ENCODE measurements at regions of chr14 and their contacts with region 1.

Region 1: GRCh38 chr14:67583711-67584644 is 16.1 kb downstream of the PIGH start:
- DNase-seq: peak in 1 of 2 donors; percentile 27
- H3K4me3 ChIP-seq: no peak overlapping the region
- H3K27ac ChIP-seq: no peak overlapping the region
- H3K4me1 ChIP-seq: no peaks in the 10 kb centered on the region
- H3K27me3 ChIP-seq: no peaks in the 10 kb centered on the region
- CTCF ChIP-seq: peak; percentile 20 to 48 (median 39)
- POLR2A ChIP-seq: no peak

Region 2: DNA sequence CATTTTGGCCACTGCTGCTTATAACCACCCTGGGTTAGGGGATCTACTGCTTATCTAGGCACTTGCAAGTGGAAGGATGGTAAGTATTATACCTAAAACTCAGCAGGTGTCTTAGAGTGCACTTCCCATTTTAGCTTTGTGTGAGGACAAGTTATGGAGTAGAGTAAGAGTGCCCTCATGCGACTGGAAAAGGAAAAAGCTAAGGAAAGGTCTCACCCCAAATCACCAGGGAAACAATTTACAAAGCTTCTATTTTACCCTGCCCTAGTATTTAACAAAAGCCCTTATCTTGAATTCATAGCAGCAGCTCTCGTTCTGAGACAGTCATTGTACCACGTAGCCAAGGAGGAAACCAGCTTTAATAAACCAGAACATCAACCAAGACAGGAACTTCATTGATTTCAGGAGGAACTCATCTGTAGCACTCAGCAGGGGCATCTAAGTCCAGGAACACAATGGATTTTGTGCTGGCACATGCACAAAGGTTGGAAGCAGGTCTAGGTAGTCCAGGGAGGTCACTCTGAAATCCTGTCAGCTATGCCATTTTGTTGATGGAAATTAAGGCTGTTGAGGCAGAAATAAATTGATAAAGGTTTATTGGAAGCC is 120.6 kb after region 1 on chr14:
- intact Hi-C with region 1: loop called (anchors 10 kb)
- DNase-seq: no peak
- H3K4me3 ChIP-seq: no peak overlapping the region
- H3K27ac ChIP-seq: no peak overlapping the region
- H3K4me1 ChIP-seq: no peaks in the 10 kb centered on the region
- H3K27me3 ChIP-seq: no peaks in the 10 kb centered on the region
- CTCF ChIP-seq: peak in 2 of 3 experiments; percentile 44 to 53
- POLR2A ChIP-seq: no peak

Measured in vagina (tissue), 2 donors.